ENCODE measurements at regions of chr7 and their contacts with region 1.

Region 1: DNA sequence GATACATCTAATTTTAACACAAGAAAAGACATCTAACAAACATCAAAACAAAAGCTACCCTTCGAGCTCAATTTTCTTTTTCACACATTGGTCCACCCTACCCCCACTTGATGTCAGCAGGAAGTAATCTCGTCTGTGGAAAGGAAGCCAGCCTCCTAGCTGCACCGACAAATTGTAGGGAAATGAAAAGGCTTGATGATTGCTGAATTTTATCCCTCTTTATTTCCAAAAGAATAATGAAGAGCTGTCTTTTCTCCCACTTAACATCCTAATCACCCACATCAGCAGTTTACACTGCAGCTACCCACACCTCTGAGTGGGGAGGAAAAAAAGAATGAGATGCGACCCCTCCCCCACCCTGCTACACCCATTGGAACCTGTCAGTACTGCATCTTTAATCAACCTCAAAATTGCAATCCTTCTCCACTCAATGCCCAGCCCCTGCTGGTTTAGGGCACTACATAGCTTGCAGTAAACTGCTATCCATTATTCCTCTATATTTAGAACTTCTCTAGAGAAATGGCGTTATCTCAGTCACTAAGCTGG is 10.6 kb upstream of the CPVL start:
- DNase-seq: no peak
- H3K4me3 ChIP-seq: no peak overlapping the region
- H3K27ac ChIP-seq: no peak overlapping the region
- H3K4me1 ChIP-seq: peaks cover 0 to 8% (median 6%) of the 10 kb centered on the region in 4 experiments; a peak in 3 of 7 replicates
- H3K27me3 ChIP-seq: no peaks in the 10 kb centered on the region
- CTCF ChIP-seq: no peak
- EP300 ChIP-seq: no peak
- POLR2A ChIP-seq: no peak
- RAD21 ChIP-seq: no peak

Region 2: DNA sequence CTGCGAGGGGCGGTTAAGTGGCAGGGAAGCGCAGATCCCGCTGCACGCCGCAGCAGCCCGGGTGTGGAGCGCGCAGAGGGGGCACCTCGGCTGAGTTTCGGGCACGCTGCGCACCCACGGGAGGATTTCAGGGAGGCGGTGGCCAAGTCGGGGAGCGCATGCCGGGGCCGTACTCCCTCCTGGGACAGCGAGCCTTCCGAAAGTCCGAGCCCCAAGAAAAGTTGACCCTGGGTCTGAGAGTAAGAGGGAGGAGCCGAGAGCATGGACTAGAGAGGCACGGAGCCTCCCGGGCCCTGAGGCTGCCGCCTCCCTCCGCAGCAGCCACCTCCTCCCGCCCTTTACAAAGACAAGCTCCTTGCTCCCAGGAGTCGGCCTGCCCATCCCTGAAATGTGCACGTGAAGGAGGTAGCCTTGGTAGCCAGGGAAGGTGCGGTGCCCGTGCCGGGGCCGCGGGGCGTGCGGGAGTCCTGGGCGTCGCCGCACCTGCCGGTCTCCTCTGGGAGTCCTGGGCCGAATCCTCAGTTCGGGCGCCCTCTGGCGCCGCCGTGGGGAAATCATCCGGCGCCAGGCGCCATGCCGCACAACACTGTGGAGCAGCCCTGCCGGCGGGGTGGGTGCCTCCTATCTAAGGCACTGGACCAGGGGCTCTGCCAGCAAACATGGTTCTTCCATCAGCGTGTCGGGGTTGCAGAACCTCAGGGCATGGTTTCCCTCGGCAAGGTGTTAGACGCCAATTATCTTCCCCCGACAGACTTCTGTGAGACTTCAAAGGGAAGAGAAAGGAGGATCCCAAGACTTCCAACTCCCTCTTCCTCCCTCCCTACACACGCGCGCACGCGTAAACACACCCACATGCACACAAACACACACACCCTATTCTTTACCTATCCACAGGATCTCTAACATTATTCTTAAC is 302.9 kb before region 1 on chr7:
- CTCF ChIA-PET with region 1: no interaction called
- POLR2A ChIA-PET with region 1: no interaction called
- DNase-seq: peak; percentile 71 to 96
- H3K4me3 ChIP-seq: peak overlapping the region; percentile 55 to 75 (median 70)
- H3K27ac ChIP-seq: no peak overlapping the region
- H3K4me1 ChIP-seq: no peaks in the 10 kb centered on the region
- H3K27me3 ChIP-seq: peaks cover 0 to 8% (median 0%) of the 10 kb centered on the region in 4 experiments; a peak in 2 of 7 replicates
- CTCF ChIP-seq: peak; percentile 74 to 98 (median 81)
- EP300 ChIP-seq: no peak
- POLR2A ChIP-seq: no peak
- RAD21 ChIP-seq: peak; percentile 82 to 88

Region 3: DNA sequence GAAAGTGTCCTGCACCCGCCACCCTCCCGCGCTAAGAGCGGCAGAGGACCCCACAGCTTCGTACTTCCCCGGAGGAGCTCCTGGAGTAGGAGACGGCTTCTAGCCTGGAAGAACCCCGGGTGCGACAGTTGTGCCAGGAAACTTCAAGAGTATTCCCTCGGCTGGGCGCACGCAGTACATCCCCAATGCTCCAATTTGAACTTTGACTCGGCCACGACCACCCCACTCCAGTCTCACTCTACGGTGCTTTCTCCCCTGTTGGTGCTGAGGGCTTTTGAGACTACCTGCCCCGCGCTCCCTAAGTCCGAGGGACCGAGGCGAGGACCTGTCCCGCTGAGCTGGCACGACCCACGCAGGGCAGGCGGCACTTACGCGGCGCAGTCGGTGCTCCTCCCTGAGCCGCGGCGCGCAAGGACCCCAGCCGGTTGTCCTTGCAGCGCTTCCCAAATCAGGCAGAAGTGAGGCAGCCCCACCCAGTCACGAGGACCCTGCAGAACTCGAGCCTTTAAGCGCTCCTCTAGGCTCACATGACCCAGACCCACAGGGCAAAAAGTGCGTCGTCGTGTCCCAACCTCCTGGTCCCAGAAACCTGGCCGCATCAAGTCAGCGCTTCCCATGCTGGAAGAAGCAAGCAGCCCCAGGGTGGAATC is 10.8 kb before region 1 on chr7 and contains the start of gene CPVL:
- CTCF ChIA-PET with region 1: interaction called, 19 read pairs
- POLR2A ChIA-PET with region 1: interaction called, 5 read pairs
- DNase-seq: peak; percentile 62 to 77
- H3K4me3 ChIP-seq: peak within 1 kb of the TSS; percentile 68 to 82 (median 74)
- H3K27ac ChIP-seq: no peak within 1 kb of the TSS
- H3K4me1 ChIP-seq: peaks cover 0 to 3% (median 0%) of the 10 kb centered on the region in 4 experiments; a peak in 3 of 7 replicates
- H3K27me3 ChIP-seq: peaks cover 0 to 10% (median 4%) of the 10 kb centered on the region in 4 experiments; a peak in 5 of 7 replicates
- CTCF ChIP-seq: no peak
- EP300 ChIP-seq: no peak
- POLR2A ChIP-seq: peak in 1 of 2 experiments; percentile 37; a peak in 1 of 3 replicates
- RAD21 ChIP-seq: no peak
- total RNA-seq, gene CPVL: 39.5 and 40.0 TPM in 2 replicates

Region 4: GRCh38 chr7:29381206-29382094 is 224.5 kb after region 1 on chr7:
- CTCF ChIA-PET with region 1: no interaction called
- POLR2A ChIA-PET with region 1: no interaction called
- DNase-seq: no peak
- H3K4me3 ChIP-seq: no peak overlapping the region
- H3K27ac ChIP-seq: no peak overlapping the region
- H3K4me1 ChIP-seq: no peaks in the 10 kb centered on the region
- H3K27me3 ChIP-seq: no peaks in the 10 kb centered on the region
- CTCF ChIP-seq: no peak
- EP300 ChIP-seq: no peak
- POLR2A ChIP-seq: no peak
- RAD21 ChIP-seq: no peak